Calu3 (cell line): ENCODE measurements at regions of chr12 and their contacts with region 1.

Region 1: DNA sequence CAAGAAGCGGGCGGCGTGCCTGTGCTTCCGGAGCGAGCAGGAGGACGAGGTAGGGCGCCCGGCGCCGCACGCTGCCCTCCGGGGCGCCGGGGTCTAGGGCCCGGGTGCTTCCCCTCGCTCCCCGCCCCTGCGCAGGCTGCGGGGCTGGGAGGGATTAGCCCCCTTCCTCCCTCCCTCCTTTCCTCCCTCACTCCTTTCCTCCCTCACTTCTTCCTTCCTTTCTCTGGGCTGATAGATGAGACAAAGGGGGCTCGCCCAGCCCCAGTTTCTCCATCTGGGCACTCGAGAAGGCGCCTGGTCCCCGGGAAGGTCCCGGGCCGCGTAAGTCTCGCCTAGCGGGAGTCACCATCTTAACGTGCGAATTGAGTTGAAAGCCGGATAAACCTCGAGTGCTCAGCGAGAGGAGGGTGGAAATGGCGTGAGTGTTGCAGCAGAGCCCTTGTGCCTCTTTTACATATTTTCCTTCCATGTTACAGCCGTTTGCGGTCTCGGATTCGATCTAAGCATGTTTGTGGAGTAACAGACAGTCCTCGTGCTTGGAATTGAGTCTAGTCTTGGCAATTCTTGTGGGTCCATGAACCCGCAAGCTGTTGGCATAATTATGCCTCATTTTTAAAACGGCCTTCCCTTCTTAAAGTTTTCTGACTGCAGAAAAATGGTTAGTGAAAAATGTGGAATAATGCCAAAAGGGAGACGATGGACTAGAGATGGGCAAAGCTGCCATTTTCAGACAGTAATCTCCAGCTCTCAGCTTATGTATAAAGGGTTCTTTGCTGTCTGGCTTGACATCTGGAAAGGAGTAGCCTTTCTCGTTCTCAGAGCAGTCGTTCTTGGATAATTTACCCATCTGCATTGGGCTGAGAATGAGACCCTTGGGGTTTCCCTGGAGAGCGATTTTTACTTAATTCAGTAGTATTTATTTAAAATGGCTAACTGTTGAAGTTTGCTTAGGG is 924 bp downstream of the NUDT4 start:
- DNase-seq: peak; percentile 51
- H3K4me3 Mint-ChIP-seq: peak overlapping the region; percentile 99
- H3K27ac Mint-ChIP-seq: peak overlapping the region; percentile 96
- H3K4me1 Mint-ChIP-seq: peaks cover 58% of the 10 kb centered on the region
- H3K27me3 Mint-ChIP-seq: no peaks in the 10 kb centered on the region
- CTCF ChIP-seq: no peak

Region 2: DNA sequence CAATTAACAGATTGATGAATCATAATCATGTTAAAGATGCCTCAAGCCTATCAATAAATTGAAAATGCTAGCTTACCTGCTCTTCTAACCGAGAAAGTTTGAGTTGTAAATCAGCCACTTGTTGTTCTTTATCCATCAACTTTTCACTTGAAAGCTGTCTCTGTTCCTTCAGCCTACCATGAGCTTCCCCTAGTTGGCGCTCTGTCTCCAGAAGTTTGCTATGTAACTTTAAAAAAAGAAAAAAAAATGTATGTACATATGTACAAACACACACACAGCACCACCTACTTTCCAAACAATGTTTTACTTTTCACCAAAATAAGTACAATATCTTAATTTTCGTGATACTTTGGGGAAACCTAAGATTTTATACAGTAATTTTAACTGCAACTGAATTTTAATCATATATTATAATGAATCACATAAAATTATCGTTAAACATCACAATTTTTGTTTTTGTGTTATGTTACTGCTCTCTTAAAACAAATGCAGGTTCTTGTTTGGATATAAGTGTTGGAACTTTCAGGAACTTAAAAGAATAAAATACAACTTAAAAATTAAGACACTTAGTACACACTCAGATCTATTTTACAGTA is 550.7 kb before region 1 on chr12:
- CTCF ChIA-PET with region 1: interaction called, 4 read pairs
- intact Hi-C with region 1: loop called (anchors 5 kb)
- DNase-seq: peak; percentile 41
- H3K4me3 Mint-ChIP-seq: no peak overlapping the region
- H3K27ac Mint-ChIP-seq: no peak overlapping the region
- H3K4me1 Mint-ChIP-seq: no peaks in the 10 kb centered on the region
- H3K27me3 Mint-ChIP-seq: no peaks in the 10 kb centered on the region
- CTCF ChIP-seq: peak; percentile 71

Region 3: GRCh38 chr12:93025145-93025805 is 353.4 kb before region 1 on chr12:
- CTCF ChIA-PET with region 1: interaction called, 4 read pairs
- intact Hi-C with region 1: loop called (anchors 1 kb)
- DNase-seq: peak; percentile 40
- H3K4me3 Mint-ChIP-seq: no peak overlapping the region
- H3K27ac Mint-ChIP-seq: no peak overlapping the region
- H3K4me1 Mint-ChIP-seq: peaks cover 31% of the 10 kb centered on the region
- H3K27me3 Mint-ChIP-seq: no peaks in the 10 kb centered on the region
- CTCF ChIP-seq: peak; percentile 45

Region 4: DNA sequence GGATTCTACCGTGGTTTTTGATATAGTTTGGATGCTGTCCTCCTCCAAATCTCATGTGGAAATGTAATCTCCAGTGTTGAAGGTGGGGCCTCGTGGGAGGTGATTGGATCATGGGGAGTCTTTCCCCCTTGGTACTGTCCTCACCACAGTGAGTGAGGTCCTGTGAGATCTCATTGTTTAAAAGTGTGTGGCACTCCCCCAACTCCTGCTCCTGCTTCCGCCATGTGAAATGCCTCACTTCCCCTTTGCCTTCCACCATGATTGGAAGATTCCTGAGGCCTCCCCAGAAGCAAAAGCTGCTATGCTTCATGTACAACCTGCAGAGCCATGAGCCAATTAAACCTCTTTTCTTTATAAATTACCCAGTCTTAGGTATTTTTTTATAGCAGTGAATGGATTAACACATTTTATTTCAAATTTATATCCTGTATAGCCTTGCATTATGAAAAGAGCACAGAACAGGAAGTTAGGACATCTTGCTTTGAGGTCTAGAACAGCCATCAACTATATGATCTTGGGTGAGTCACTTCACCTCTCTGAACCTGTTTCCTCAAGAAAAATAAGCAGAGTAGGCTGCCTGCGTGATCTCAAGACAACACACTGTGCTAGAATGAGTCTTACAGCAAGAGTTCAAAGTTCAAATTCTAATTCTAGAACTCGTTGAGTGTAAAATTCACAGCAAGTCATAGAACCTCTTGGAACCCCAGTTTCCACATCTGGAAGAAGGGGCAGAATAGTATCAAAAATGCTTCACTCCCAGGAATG is 288.7 kb before region 1 on chr12:
- CTCF ChIA-PET with region 1: no interaction called
- intact Hi-C with region 1: loop called (anchors 2 kb)
- DNase-seq: peak; percentile 43
- H3K4me3 Mint-ChIP-seq: no peak overlapping the region
- H3K27ac Mint-ChIP-seq: peak overlapping the region; percentile 85
- H3K4me1 Mint-ChIP-seq: peaks cover 64% of the 10 kb centered on the region
- H3K27me3 Mint-ChIP-seq: no peaks in the 10 kb centered on the region
- CTCF ChIP-seq: no peak

Region 5: GRCh38 chr12:93146263-93146939 is 232.2 kb before region 1 on chr12:
- CTCF ChIA-PET with region 1: no interaction called
- intact Hi-C with region 1: loop called (anchors 5 kb)
- DNase-seq: peak; percentile 59
- H3K4me3 Mint-ChIP-seq: no peak overlapping the region
- H3K27ac Mint-ChIP-seq: no peak overlapping the region
- H3K4me1 Mint-ChIP-seq: peaks cover 19% of the 10 kb centered on the region
- H3K27me3 Mint-ChIP-seq: no peaks in the 10 kb centered on the region
- CTCF ChIP-seq: no peak

Region 6: DNA sequence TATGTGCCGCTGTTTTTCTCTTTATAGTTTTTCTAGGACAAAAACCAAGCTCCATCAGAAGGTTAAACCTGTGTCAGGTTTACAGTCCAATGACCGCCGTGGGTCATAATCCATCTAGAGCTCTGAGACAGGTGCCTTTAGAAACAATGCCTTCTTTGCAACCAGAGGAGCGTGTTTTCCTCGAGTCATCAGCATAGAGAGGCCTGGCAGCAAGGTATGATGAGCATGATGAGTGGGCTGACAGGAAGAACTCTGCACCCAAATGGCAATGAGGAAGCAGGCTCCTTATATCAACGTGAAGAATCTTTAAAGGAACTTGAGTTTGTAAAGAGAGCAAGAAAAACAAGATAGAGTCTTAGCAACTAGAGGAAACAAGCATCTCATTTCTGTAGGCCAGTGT is 61.4 kb before region 1 on chr12:
- CTCF ChIA-PET with region 1: interaction called, 3 read pairs
- intact Hi-C with region 1: loop called (anchors 1 kb)
- DNase-seq: peak; percentile 14
- H3K4me3 Mint-ChIP-seq: no peak overlapping the region
- H3K27ac Mint-ChIP-seq: peak overlapping the region; percentile 50
- H3K4me1 Mint-ChIP-seq: peaks cover 64% of the 10 kb centered on the region
- H3K27me3 Mint-ChIP-seq: no peaks in the 10 kb centered on the region
- CTCF ChIP-seq: no peak

Region 7: DNA sequence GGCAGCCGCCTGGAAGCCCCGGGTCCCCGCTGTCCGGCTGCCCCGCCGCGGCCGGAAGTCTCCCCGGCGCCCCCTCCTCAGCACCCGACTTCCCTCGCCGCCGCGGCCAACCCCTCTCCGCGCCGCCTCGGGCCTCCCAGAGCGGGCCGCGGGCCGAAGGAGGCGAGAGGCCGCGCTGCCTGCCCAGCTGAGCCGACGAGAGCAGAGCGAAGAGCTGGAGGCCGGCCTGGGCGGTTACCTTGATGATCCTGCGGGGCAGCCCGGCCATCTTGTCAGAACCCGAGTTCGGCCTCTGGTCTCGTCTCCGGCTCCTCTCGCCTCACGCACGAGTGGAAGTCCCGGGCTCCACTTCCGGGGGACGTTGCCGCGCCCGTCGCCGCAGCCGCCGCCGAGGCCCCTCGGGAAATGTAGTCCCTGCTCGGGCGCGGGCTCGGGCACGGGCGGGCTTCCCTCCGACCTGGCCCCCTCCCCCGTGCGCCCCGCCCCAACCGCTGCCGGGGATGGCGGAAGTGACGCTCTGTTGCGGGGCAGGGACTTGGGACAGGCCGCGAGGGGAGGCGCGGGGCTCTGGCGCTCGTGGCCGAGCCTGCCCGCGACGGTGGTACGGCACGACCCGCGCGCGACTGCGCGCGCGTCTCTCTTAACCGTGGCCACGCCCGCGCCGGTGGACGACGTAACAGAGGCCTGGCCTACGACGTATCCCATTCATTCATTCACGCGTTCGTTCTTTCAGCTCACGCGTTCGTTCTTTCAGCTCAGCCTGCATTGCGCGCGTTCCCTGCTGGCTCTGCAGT is 63.2 kb after region 1 on chr12 and contains the start of gene UBE2N:
- CTCF ChIA-PET with region 1: no interaction called
- intact Hi-C with region 1: no loop called
- DNase-seq: peak; percentile 98
- H3K4me3 Mint-ChIP-seq: peak within 1 kb of the TSS; percentile 99
- H3K27ac Mint-ChIP-seq: peak within 1 kb of the TSS; percentile 100
- H3K4me1 Mint-ChIP-seq: peaks cover 49% of the 10 kb centered on the region
- H3K27me3 Mint-ChIP-seq: no peaks in the 10 kb centered on the region
- CTCF ChIP-seq: no peak
- total RNA-seq, gene UBE2N: 148 and 159 TPM in 2 replicates

Region 8: DNA sequence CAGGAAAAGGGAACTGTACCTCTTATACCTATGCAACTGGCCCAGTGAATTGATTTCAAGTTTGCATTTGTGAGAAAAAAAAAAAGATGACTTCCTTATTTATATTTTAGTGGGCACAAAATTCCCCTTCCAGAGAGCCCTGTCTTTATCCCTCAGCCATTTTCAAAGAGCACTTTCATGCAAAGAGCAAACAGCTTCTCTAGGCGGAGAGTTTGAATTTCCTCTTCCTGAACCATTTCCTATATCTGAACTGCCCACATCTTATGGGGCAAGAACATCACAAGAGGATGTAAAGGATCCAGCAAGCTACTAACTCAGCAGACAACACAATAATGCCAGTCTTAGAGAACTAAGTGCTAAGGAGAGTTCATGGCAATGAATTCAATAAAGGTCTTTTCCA is 747.4 kb after region 1 on chr12:
- CTCF ChIA-PET with region 1: no interaction called
- intact Hi-C with region 1: no loop called
- DNase-seq: no peak
- H3K4me3 Mint-ChIP-seq: no peak overlapping the region
- H3K27ac Mint-ChIP-seq: no peak overlapping the region
- H3K4me1 Mint-ChIP-seq: no peaks in the 10 kb centered on the region
- H3K27me3 Mint-ChIP-seq: peaks cover 80% of the 10 kb centered on the region
- CTCF ChIP-seq: no peak